Dendritic cell treated with granulocyte-macrophage colony-stimulating factor and Interleukin-4, amounts not matched to agents 40 ng/mL and 50 ng/mL, for 4 days (primary cell): ENCODE measurements at regions of chr5 and their contacts with region 1.

Region 1: DNA sequence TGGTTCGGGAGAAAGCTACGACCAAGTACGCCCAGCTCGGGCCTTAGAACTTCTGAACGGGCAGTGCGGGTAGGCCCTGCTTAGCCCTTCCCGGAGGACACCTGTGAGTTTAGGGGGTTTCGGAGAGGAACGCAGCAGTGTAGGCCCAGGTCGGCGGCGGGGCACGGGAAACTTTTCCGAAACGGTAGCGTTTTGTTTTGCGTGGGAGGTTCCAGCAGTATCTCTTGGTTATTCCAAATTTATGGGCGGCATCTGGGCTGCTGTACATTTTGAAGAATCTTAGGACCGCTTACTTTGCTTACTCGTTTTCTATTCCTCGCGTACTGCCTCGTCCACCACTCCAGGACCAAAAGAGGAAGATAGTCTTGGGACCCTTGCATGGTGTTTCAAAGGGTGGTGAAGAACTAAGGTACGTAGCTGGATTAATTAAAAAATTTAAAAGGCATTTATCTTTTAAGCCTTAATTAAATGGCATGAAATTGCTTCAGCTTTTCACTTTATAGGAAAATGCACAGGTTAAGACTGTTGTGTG is 492 bp downstream of the TENT2 start:
- H3K4me3 Mint-ChIP-seq: peak overlapping the region; percentile 97
- H3K27ac Mint-ChIP-seq: peak overlapping the region; percentile 99
- H3K4me1 Mint-ChIP-seq: peaks cover 20% of the 10 kb centered on the region
- H3K27me3 Mint-ChIP-seq: peaks cover 2% of the 10 kb centered on the region

Region 2: DNA sequence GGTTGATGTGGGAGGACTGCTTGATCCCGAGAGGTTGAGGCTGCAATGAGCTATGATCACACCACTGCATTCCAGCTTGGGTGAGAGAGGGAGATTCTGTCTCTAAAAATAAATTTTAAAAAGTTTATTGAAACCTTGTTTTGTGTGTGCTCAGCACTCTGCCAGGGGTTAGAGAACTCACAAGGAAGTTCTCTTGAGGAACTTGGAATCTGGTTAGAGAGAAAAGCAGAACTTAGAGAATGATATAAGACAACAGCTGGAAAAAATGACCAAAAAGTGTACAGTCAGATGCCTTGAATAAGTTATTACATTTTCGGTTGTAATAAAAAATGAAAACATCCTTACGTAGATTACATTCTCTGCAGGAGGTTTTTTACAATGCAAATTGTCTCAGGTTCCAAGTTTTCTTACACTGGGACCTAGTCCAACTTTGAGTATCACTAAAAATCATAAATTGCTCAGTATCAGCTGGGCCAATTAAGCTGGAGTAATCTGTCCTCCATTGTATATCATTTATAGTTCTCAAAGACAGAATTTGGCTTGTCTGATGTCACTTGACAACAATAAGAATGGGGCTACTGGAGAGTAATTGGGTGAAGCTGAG is 22.2 kb before region 1 on chr5:
- intact Hi-C with region 1: loop called (anchors 1 kb)
- H3K4me3 Mint-ChIP-seq: peak overlapping the region; percentile 13
- H3K27ac Mint-ChIP-seq: peak overlapping the region; percentile 81
- H3K4me1 Mint-ChIP-seq: peaks cover 21% of the 10 kb centered on the region
- H3K27me3 Mint-ChIP-seq: peaks cover 2% of the 10 kb centered on the region